Vagina (tissue), 2 donors: ENCODE measurements at regions of chr16 and their contacts with region 1.

Region 1: DNA sequence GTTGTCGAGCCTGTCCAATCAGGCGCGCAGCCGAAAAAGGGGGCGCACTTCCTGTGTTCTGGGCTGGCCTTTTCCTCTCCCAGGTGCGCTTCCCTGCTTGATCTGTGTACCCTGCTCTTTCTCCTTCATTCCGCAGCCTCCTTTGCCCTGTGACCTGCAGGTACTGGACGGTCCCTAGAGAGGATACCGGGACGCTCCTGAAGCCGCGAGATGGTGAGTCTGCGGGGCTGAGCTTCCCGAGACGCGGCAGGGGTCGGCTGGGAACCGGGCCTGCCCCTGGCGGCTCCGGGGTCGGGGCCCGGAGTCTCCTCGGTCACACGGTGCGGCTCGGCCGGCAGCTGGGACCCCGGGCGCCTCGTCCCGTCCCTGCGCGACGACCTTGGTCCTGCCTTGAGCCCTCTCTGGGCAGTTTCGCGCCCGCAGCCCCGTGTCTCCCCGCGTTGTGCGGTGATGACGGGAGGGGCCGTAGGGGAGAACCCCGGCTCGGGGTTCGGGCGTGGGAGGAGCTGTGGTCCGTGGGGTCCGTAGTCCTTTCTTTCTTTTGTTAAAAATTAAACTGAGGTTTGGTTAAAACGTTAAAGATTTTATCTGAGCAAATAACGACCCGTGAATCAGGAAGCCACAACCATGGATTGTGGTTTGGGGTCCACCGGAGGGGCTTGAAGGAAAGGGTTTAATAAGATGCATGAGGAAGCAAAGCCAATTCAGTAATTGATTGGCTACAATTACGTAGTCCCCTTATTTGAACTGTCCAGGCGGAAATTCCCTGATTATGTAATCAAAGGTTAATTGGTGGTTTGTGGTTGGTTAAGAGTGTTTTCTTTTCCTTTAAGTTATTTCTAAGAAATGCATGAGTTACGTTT is 172.8 kb upstream of the ZNF267 start:
- DNase-seq: peak in 1 of 2 donors; percentile 88
- H3K4me3 ChIP-seq: peak overlapping the region; percentile 64 to 93
- H3K27ac ChIP-seq: peak overlapping the region; percentile 72
- H3K4me1 ChIP-seq: peaks cover 18% of the 10 kb centered on the region
- H3K27me3 ChIP-seq: no peaks in the 10 kb centered on the region
- CTCF ChIP-seq: no peak
- POLR2A ChIP-seq: no peak

Region 2: GRCh38 chr16:31636433-31636832 is 64.3 kb before region 1 on chr16:
- intact Hi-C with region 1: no loop called
- DNase-seq: no peak
- H3K4me3 ChIP-seq: no peak overlapping the region
- H3K27ac ChIP-seq: no peak overlapping the region
- H3K4me1 ChIP-seq: no peaks in the 10 kb centered on the region
- H3K27me3 ChIP-seq: no peaks in the 10 kb centered on the region
- CTCF ChIP-seq: no peak
- POLR2A ChIP-seq: no peak

Region 3: DNA sequence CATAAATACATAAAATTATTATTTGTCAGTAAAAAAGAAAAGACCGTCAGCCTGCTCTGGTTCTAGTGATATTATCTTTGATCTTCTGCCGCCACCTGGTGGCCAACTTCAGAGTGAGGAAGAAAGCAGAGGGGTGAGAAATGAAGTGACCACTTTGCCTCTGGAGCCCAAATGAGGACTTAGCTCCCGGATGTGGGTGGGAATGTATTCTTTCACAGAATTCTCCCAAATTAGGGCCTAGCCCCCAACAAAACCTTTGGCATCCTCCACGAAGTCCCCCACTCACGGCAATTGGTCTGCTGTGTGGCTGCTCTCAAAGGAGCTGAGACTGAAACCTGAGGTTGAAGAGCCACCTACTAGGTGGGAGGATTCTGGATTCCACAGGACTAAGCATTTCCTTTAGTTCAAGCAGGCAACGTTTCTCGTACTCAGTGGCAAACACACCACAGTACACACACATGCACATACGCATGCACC is 168.0 kb after region 1 on chr16:
- intact Hi-C with region 1: loop called (anchors 10 kb)
- DNase-seq: peak in 1 of 2 donors; percentile 70
- H3K4me3 ChIP-seq: no peak overlapping the region
- H3K27ac ChIP-seq: no peak overlapping the region
- H3K4me1 ChIP-seq: peaks cover 6% of the 10 kb centered on the region
- H3K27me3 ChIP-seq: no peaks in the 10 kb centered on the region
- CTCF ChIP-seq: peak; percentile 56 to 84 (median 79)
- POLR2A ChIP-seq: no peak